SK-N-SH (cell line): ENCODE measurements at regions of chr10 and their contacts with region 1.

Region 1: GRCh38 chr10:100878291-100878910 is 34.4 kb upstream of the SLF2 start:
- DNase-seq: peak; percentile 80
- H3K4me3 ChIP-seq: no peak overlapping the region
- H3K27ac ChIP-seq: no peak overlapping the region
- H3K4me1 ChIP-seq: peaks cover 0 to 30% of the 10 kb centered on the region in 2 experiments; a peak in 2 of 4 replicates
- H3K27me3 ChIP-seq: no peaks in the 10 kb centered on the region
- CTCF ChIP-seq: peak; percentile 79
- EP300 ChIP-seq: no peak
- RAD21 ChIP-seq: peak; percentile 96

Region 2: GRCh38 chr10:99732033-99732912 is 1146.1 kb before region 1 on chr10 and contains the starts of genes COX15 and CUTC:
- CTCF ChIA-PET with region 1: no interaction called
- POLR2A ChIA-PET with region 1: no interaction called
- DNase-seq: peak; percentile 96
- H3K4me3 ChIP-seq: peak within 1 kb of the TSS; percentile 89 to 91
- H3K27ac ChIP-seq: peak within 1 kb of the TSS; percentile 84 to 91
- H3K4me1 ChIP-seq: peaks cover 0 to 9% of the 10 kb centered on the region in 2 experiments; a peak in 3 of 4 replicates
- H3K27me3 ChIP-seq: no peaks in the 10 kb centered on the region
- CTCF ChIP-seq: peak; percentile 51
- EP300 ChIP-seq: no peak
- RAD21 ChIP-seq: 0 out of 2 replicates have a peak, but pooled peaks have one; percentile 5
- polyA plus RNA-seq, gene COX15: 20.4 and 26.3 TPM in 2 replicates
- polyA plus RNA-seq, gene CUTC: 19.4 and 21.1 TPM in 2 replicates

Region 3: DNA sequence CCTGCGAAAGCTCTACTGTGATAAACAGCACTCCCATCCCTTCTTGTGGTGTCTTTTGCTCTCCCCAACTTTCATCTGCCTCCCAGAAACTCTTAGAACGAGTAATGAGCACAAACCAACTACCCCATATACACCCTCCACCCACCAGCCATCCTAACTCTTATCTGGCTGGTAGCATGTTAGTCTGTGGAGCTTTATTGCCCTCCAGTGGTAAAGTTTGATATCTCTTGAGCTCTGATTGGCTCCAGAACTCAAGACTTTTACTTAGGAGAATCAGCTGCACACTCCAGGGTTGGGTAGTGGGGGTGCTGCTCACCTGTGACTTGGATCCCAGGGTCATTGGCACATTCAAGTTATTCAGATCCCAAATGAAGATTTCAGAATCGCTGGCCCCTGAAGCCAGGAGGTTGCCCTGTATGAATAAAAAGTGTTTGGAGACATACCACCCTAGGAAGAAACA is 369.7 kb before region 1 on chr10:
- CTCF ChIA-PET with region 1: interaction called, 10 read pairs
- POLR2A ChIA-PET with region 1: no interaction called
- DNase-seq: peak; percentile 70
- H3K4me3 ChIP-seq: no peak overlapping the region
- H3K27ac ChIP-seq: no peak overlapping the region
- H3K4me1 ChIP-seq: peaks cover 0 to 15% of the 10 kb centered on the region in 2 experiments; a peak in 2 of 4 replicates
- H3K27me3 ChIP-seq: no peaks in the 10 kb centered on the region
- CTCF ChIP-seq: peak; percentile 81
- EP300 ChIP-seq: no peak
- RAD21 ChIP-seq: peak; percentile 94

Region 4: DNA sequence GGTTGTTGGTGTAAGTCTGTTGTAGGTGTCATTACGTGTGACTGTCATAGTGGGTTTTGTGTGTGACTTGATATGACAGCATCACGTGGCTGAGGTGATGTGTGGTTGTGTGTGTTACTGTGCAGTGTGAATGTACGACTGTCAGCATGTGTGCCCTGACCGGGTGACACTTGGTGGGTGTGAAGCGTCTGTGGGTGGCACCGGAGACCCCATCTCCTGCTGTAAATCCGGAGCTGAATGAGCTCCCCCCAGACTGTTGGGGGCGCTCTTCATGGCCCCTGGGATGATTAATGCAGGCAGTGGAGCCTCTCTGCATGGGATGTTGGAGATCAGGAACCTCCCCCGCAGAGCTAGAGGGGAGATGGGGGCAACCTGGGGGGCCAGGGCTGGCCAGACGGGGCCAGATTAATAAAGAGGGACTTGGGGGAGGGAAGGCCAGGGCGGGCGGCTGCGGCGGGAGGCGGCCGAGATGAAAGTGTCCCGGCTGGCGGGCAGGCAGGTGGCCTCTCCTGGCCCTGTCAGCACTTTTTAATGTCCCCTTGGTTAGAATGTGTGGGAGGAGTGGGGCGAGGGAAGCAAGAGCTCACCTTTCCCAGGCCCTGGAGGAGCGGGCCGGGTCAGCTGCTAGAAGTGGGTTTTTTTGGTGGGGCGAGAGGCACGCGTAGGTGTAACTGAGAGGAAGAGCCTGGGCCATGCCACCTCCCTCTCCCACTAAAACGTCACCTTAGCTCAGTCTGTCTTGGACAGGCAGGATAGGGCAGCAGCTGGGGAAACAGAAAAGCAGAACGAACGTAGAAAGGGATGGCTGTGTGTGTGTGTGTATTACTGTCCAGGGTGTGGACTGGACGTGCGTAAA is 308.6 kb before region 1 on chr10:
- CTCF ChIA-PET with region 1: interaction called, 143 read pairs
- POLR2A ChIA-PET with region 1: no interaction called
- DNase-seq: peak; percentile 27
- H3K4me3 ChIP-seq: no peak overlapping the region
- H3K27ac ChIP-seq: no peak overlapping the region
- H3K4me1 ChIP-seq: no peaks in the 10 kb centered on the region
- H3K27me3 ChIP-seq: peaks cover 11% of the 10 kb centered on the region; the same call in 1 of the 2 replicates
- CTCF ChIP-seq: no peak
- EP300 ChIP-seq: no peak
- RAD21 ChIP-seq: no peak

Region 5: GRCh38 chr10:100751211-100751933 is 127.0 kb before region 1 on chr10:
- CTCF ChIA-PET with region 1: interaction called, 13 read pairs
- POLR2A ChIA-PET with region 1: no interaction called
- DNase-seq: no peak
- H3K4me3 ChIP-seq: no peak overlapping the region
- H3K27ac ChIP-seq: no peak overlapping the region
- H3K4me1 ChIP-seq: peaks cover 0 to 4% of the 10 kb centered on the region in 2 experiments; a peak in 1 of 4 replicates
- H3K27me3 ChIP-seq: peaks cover 96% of the 10 kb centered on the region
- CTCF ChIP-seq: no peak
- EP300 ChIP-seq: no peak
- RAD21 ChIP-seq: no peak

Region 6: GRCh38 chr10:100858747-100859483 is 19.5 kb before region 1 on chr10:
- CTCF ChIA-PET with region 1: interaction called, 15 read pairs
- POLR2A ChIA-PET with region 1: interaction called, 3 read pairs
- DNase-seq: no peak
- H3K4me3 ChIP-seq: no peak overlapping the region
- H3K27ac ChIP-seq: no peak overlapping the region
- H3K4me1 ChIP-seq: peaks cover 0 to 9% of the 10 kb centered on the region in 2 experiments; a peak in 1 of 4 replicates
- H3K27me3 ChIP-seq: peaks cover 67% of the 10 kb centered on the region
- CTCF ChIP-seq: no peak
- EP300 ChIP-seq: no peak
- RAD21 ChIP-seq: no peak